CD4-positive, alpha-beta T cell (primary cell): ENCODE measurements at regions of chr4 and their contacts with region 1.

Region 1: DNA sequence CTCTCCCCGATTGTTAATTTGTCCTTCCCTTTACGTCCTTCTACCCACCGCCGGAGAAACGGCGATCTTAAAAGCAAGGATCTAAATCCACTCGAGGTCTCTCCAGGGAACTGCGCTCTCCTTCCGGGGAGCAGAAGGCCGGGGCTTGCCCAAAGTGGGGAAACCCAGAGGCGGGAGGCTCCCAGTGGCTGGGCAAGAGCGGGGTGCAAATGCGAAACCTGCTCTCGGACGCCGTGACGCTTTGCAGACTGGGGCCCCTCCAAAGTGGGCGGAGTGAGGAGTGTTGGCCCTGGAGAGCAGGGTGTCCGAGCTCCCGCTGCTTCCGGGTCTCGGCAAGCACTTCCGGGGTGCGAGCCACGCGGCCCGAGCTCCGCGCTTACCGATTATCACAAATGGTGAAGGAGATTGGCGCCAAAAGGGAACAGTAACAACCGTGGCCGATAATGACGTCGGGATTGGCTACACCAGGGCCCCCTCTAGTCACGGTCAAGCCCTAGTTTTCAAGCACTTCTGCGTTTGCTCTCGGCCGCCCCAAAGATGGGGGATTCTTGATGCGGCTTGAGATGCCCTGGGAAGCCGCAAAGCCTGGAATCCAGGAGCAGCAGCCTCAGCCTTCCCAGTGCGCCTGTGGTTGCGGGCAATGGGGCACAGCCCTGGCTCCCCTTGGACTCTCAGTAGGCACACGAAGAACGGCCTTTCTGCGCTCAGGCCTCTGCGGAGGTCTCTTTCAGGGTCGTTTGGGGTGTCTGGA is 29.0 kb downstream of the HAND2 start:
- DNase-seq: peak in 1 of 14 experiments; percentile 45
- ATAC-seq: no peak
- H3K4me3 ChIP-seq: peak overlapping the region; percentile 52
- H3K4me3 Mint-ChIP-seq: peak overlapping the region; percentile 66
- H3K27ac ChIP-seq: no peak overlapping the region
- H3K27ac Mint-ChIP-seq: no peak overlapping the region
- H3K4me1 ChIP-seq: peaks cover 16% of the 10 kb centered on the region
- H3K4me1 Mint-ChIP-seq: peaks cover 17% of the 10 kb centered on the region
- H3K27me3 ChIP-seq: peaks cover 68 to 84% of the 10 kb centered on the region in 2 experiments
- H3K27me3 Mint-ChIP-seq: peaks cover 92% of the 10 kb centered on the region
- CTCF ChIP-seq: no peak

Region 2: DNA sequence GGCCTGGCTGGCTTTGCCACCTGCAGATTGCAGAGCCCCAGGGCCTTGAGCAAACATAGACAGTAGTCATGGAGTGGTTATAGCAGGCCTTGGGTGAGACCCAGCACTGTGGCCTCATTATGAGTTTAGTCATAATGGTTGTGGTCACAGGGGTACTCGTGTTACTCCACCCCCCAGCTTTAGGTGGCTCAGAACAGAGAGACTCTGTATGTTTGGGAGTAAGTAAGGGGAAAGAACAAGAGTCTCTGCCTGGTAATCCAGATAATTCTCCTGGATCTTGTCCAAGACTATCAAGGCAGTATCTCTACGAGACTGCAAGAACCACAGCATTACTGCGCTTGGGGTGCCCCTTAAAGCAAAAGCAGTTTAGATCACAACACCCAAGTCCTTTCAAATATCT is 39.8 kb before region 1 on chr4:
- CTCF ChIA-PET with region 1: no interaction called
- POLR2A ChIA-PET with region 1: no interaction called
- intact Hi-C with region 1: no loop called
- DNase-seq: no peak
- ATAC-seq: no peak
- H3K4me3 ChIP-seq: no peak overlapping the region
- H3K4me3 Mint-ChIP-seq: no peak overlapping the region
- H3K27ac ChIP-seq: no peak overlapping the region
- H3K27ac Mint-ChIP-seq: no peak overlapping the region
- H3K4me1 ChIP-seq: no peaks in the 10 kb centered on the region
- H3K4me1 Mint-ChIP-seq: no peaks in the 10 kb centered on the region
- H3K27me3 ChIP-seq: no peaks in the 10 kb centered on the region
- H3K27me3 Mint-ChIP-seq: no peaks in the 10 kb centered on the region
- CTCF ChIP-seq: no peak

Region 3: DNA sequence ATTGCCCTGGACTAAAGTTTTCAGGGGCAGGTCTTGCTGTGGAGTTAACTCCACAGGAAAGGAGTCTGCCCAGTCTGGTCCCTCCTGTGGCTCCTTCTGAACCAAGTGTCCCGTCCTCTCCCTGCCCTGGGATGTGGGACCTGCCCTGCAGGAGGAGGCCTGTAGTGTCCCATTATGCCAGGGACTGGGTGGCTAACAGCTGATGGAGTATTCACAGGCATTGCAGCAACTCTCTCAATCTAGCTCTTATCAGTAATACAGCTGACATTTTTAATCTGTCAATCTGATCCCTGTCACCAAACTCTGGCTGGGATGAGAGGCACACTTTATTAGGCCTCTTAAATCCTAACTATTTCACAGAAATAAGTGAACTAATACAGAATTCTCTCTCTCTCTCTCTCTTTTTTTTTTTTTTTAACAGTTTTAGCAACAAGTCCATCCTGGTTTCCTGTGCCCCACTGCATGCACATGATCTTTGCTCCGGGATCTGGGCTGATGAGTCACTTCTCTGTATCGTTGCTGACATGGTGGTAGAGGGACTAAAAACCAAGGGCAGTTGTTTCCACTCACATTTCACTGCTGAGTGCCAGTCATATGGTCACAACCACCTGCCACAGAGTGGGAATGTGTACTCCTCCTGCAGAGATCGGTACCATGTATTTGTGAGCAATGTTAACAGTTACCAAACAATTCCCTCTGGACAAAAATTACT is 10.0 kb before region 1 on chr4:
- CTCF ChIA-PET with region 1: no interaction called
- POLR2A ChIA-PET with region 1: no interaction called
- intact Hi-C with region 1: no loop called
- DNase-seq: no peak
- ATAC-seq: no peak
- H3K4me3 ChIP-seq: no peak overlapping the region
- H3K4me3 Mint-ChIP-seq: no peak overlapping the region
- H3K27ac ChIP-seq: no peak overlapping the region
- H3K27ac Mint-ChIP-seq: no peak overlapping the region
- H3K4me1 ChIP-seq: peaks cover 9% of the 10 kb centered on the region
- H3K4me1 Mint-ChIP-seq: peaks cover 22% of the 10 kb centered on the region
- H3K27me3 ChIP-seq: peaks cover 0 to 5% of the 10 kb centered on the region in 2 experiments
- H3K27me3 Mint-ChIP-seq: peaks cover 35% of the 10 kb centered on the region
- CTCF ChIP-seq: no peak

Region 4: GRCh38 chr4:174120446-174121295 is 619.7 kb after region 1 on chr4:
- CTCF ChIA-PET with region 1: no interaction called
- POLR2A ChIA-PET with region 1: no interaction called
- intact Hi-C with region 1: loop called in 1 of 2 experiments (anchors 5 kb)
- DNase-seq: peak in 4 of 14 experiments; percentile 15 to 43 (median 35)
- ATAC-seq: no peak
- H3K4me3 ChIP-seq: no peak overlapping the region
- H3K4me3 Mint-ChIP-seq: no peak overlapping the region
- H3K27ac ChIP-seq: no peak overlapping the region
- H3K27ac Mint-ChIP-seq: no peak overlapping the region
- H3K4me1 ChIP-seq: peaks cover 3% of the 10 kb centered on the region
- H3K4me1 Mint-ChIP-seq: peaks cover 11% of the 10 kb centered on the region
- H3K27me3 ChIP-seq: peaks cover 4 to 24% of the 10 kb centered on the region in 2 experiments
- H3K27me3 Mint-ChIP-seq: peaks cover 66% of the 10 kb centered on the region
- CTCF ChIP-seq: no peak